ENCODE measurements at regions of chr10 and their contacts with region 1.

Region 1: GRCh38 chr10:114388275-114388674 is 16.0 kb downstream of the AFAP1L2 start:
- DNase-seq: no peak
- H3K4me3 Mint-ChIP-seq: no peak overlapping the region
- H3K27ac Mint-ChIP-seq: peak overlapping the region; percentile 53
- H3K4me1 Mint-ChIP-seq: peaks cover 16% of the 10 kb centered on the region
- H3K27me3 Mint-ChIP-seq: no peaks in the 10 kb centered on the region

Region 2: DNA sequence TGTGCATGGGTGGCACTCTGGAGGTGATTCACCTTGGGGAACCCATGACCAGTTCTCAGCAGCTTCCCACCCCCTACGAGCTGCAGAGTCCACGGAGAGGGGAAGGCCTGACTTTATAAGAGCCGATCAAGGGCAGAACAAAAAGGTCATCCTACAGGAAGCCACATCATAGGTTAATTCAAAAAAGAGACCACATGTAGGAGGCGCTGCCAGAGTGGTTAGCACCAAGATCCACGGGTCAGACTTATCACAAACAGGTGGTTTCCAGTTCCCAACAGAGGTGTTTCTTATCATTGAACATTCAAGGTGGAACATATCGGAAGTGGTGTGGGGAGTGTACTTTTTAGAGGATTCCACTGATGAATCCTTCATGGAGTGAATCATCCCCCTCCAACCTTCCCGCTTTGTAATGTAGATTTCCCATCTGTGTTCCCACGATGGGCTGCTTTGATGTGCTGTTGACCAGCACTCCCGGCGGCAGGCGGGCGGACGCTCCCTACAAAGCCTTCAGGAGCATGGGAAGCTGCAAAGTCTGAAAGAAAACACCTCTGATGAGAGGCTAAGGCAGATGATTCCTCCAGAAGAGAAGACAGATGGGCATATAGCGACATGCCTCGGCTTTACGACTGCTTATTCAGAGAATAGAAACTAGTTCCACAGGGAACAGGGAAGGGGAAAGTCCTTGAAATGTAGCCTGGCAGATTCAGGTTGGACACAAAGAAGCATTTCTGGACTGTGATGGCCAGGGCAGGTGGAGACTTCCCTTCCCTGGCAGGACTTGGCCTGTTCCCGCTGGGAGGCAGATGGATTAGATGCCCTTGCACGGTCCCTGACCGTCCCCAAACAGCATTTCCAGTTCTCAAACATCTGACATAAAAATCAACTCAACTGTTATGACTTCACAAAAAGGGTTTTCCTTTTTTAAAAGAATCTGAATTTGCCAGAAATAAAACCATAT is 50.5 kb before region 1 on chr10:
- intact Hi-C with region 1: loop called (anchors 5 kb)
- DNase-seq: no peak
- H3K4me3 Mint-ChIP-seq: no peak overlapping the region
- H3K27ac Mint-ChIP-seq: peak overlapping the region; percentile 46
- H3K4me1 Mint-ChIP-seq: peaks cover 33% of the 10 kb centered on the region
- H3K27me3 Mint-ChIP-seq: peaks cover 2% of the 10 kb centered on the region

Region 3: DNA sequence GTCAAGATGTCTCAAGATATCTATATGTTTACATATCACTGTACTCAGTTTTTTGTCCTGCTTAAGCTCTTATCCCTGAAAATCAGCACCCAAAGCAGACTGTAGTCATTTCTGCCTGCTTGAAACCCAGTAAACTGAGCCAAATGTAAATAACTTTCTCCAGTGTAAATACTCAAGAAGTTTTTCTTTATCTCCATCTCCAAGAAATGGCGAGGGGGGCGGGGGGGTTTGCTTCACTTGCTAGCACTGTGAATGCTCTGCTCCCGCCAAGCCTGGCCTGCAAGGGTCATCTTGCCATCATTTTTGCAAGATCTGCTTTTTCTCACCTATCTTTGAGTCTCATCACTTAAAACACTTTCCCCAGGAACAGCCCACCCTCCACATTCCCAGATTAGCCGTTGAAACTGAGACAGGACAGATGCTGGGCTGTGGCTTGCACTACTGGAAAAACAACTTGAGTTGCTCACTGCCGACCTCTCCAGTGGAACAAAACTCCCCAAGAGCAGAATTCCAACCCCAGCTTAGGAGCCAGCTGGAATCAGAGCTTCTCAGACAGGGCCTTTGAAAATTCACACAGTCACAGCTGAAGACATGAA is 38.6 kb before region 1 on chr10:
- intact Hi-C with region 1: loop called (anchors 5 kb)
- DNase-seq: no peak
- H3K4me3 Mint-ChIP-seq: no peak overlapping the region
- H3K27ac Mint-ChIP-seq: no peak overlapping the region
- H3K4me1 Mint-ChIP-seq: peaks cover 6% of the 10 kb centered on the region
- H3K27me3 Mint-ChIP-seq: peaks cover 4% of the 10 kb centered on the region

Region 4: DNA sequence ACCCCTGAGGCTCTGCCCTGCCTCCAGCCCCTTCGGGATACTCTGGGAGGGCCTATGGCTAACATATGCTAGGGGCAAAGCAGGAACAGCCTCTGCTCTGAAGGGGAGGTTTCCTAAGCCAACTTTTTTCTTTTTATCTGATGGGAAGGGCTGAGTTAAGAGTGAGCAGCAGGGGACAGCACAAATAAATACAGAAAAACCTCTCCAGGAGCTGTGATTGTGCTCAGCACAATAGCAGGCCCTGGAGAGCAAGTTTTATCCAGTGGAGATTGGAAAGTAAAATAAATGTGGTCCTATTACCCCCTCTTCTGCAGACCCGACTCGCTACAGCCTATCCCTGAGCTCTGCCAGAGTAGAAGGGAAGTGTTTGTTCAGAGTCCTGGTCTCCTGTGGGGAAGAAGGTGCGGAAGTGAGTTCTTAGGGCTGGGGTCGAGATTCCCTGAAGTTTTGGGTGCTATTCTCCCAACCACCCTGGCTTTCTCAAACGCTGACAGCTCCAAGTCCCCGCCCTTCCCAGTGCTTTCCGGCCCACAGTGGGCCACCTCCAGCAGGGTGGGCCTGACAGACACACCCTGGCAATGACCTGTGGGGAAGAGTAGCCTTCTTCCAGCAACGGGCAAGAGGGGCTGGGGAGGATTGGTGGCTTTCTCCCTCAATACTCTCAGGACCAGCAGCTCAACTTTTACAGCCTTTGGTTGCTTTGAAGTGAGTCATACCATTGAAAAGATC is 39.0 kb after region 1 on chr10:
- intact Hi-C with region 1: no loop called
- DNase-seq: no peak
- H3K4me3 Mint-ChIP-seq: no peak overlapping the region
- H3K27ac Mint-ChIP-seq: no peak overlapping the region
- H3K4me1 Mint-ChIP-seq: no peaks in the 10 kb centered on the region
- H3K27me3 Mint-ChIP-seq: peaks cover 5% of the 10 kb centered on the region